Head of caudate nucleus (tissue), 42 donors: ENCODE measurements at regions of chr13 and their contacts with region 1.

Region 1: DNA sequence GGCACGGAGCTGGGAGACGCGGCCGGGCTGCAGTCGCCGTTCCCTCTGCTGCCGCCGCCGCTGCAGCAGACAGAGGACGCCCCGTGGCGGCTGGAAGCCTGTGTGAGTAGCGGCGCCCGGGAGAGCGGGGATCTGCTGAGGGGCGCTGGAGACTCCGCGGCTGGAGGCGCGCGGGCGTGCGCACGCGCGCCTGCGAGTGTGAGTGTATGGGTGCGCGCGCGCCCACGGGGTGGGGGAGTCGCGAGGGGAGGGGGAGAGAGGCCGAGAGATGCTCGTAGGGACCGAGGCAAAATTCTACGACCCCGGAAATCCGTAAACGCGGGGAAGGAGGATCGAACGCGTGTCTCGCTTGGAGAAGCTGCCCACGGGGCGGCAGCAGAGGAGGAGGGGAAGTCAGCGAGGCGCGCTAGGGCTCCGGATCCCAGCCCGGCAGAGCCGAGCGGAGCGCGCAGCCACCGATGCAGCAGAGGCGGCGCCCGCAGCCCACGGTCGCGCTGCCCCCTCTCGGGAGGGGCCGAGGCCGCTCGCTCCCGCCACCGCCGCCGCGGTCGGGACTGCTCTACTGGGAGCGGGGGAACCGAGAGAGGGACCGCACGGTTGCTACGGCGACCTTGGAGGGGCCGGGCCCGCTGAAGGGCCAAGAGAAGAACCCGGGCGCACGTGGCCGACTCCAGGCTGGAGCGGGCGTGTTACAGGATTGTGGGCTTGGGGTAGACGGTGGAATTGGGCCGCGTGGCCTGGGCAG is at the start of gene ENOX1:
- DNase-seq: peak; percentile 57 to 95 (median 88)

Region 2: GRCh38 chr13:43085545-43085944 is 701.4 kb before region 1 on chr13:
- intact Hi-C with region 1: loop called (anchors 10 kb)
- DNase-seq: no peak

Region 3: GRCh38 chr13:43303033-43303729 is 483.8 kb before region 1 on chr13:
- intact Hi-C with region 1: loop called (anchors 5 kb)
- DNase-seq: peak; percentile 37 to 85 (median 68)

Region 4: DNA sequence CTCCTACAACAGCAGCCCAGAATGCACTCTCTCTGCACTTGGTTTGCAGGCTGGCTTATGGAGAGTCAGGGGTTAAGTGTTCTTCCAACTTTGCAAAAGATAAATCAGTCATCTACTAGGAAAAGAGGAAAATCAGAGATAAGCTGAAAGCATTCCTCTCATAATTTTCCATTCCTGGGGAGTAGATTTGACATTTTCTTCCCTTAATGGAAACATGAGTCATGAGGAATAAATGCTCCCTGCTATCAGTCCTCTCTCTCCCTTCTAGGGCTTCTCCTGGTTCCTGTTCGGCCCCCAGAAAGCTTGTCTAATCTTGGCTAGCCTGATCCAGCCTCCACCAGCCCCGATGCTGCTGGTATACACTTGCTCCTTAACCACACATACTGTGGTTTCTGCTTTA is 28.3 kb after region 1 on chr13:
- intact Hi-C with region 1: no loop called
- DNase-seq: peak in 1 of 42 donors; percentile 13

Region 5: DNA sequence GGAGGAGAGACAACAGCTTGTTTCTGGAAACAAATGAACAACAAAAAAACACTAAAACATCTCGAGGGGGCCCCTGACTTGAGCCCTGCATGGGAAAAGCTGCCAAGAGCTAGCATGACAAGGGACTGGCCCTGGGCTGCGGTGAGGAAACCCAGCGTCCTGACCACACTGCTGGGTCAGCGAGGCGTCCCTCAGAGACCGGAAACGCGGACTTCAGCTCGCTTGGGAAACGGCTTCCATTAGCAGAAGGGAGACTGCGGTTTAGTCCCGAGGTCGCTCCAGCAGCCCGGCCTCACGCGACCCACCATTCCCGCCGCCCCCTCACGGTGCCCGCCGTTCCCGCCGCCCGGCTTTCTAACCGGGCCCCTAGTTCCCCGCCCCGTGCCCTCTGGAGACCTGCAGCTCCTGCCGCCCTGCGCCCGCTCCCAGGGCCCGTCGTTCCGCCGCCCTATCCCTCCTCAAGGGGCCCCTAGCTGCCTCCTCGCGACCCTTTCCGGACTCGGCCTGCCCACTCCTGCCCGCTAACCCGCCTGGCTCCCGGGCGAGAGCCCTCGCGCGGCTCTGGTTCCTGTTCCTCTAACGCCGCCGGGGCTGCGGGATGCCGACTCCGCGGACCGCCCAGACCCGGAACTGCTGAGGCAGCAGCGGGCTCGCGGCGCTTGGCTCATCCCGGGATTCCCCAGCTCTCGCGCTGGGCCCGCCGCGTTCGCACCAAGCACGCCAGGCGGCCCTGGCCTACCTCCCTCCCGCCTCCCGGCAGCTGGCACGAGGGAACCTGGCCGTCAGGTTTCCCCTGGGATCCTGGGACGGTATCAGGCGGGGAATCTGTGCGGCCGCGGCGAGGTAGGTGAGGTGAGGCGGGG is 92.2 kb after region 1 on chr13 and contains the start of gene CCDC122:
- intact Hi-C with region 1: loop called (anchors 5 kb)
- DNase-seq: peak; percentile 52 to 89 (median 76)